ENCODE measurements at regions of chr12 and their contacts with region 1.

Region 1: DNA sequence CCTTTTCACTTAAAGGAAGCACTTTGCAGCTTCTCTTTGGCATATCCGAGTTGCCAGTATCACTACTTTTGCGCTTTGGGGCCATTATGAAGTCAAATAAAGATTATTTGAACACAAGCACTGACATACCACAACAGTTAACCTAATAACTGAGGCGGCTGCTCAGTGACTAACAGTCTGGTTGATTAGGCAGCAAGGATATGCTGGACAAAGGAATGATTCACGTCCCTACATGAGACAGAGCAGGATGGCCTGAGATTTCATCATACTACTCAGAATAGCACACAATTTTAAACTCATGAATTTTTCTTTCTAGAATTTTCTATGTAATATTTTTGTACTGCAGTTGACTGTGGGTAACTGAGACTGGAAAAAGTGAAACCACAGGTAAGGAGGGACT is 56.9 kb upstream of the E2F7 start:
- DNase-seq: peak; percentile 92
- H3K4me3 ChIP-seq: no peak overlapping the region
- H3K27ac ChIP-seq: peak overlapping the region; percentile 92
- H3K4me1 ChIP-seq: peaks cover 39% of the 10 kb centered on the region
- H3K27me3 ChIP-seq: no peaks in the 10 kb centered on the region
- CTCF ChIP-seq: no peak

Region 2: GRCh38 chr12:77102691-77103090 is 19.5 kb before region 1 on chr12:
- CTCF ChIA-PET with region 1: no interaction called
- dilution Hi-C with region 1: no loop called
- in situ Hi-C with region 1: no loop called
- intact Hi-C with region 1: loop called (anchors 1 kb)
- DNase-seq: peak; percentile 59
- H3K4me3 ChIP-seq: no peak overlapping the region
- H3K27ac ChIP-seq: no peak overlapping the region
- H3K4me1 ChIP-seq: peaks cover 19% of the 10 kb centered on the region
- H3K27me3 ChIP-seq: no peaks in the 10 kb centered on the region
- CTCF ChIP-seq: no peak

Region 3: GRCh38 chr12:77189458-77189857 is 67.2 kb after region 1 on chr12:
- CTCF ChIA-PET with region 1: no interaction called
- dilution Hi-C with region 1: no loop called
- in situ Hi-C with region 1: no loop called
- intact Hi-C with region 1: loop called (anchors 2 kb)
- DNase-seq: peak; percentile 88
- H3K4me3 ChIP-seq: no peak overlapping the region
- H3K27ac ChIP-seq: peak overlapping the region; percentile 54
- H3K4me1 ChIP-seq: peaks cover 11% of the 10 kb centered on the region
- H3K27me3 ChIP-seq: no peaks in the 10 kb centered on the region
- CTCF ChIP-seq: no peak

Region 4: GRCh38 chr12:77324763-77325468 is 202.7 kb after region 1 on chr12:
- CTCF ChIA-PET with region 1: no interaction called
- dilution Hi-C with region 1: no loop called
- in situ Hi-C with region 1: no loop called
- intact Hi-C with region 1: no loop called
- DNase-seq: peak; percentile 71
- H3K4me3 ChIP-seq: peak overlapping the region; percentile 69 to 96 (median 74)
- H3K27ac ChIP-seq: peak overlapping the region; percentile 29
- H3K4me1 ChIP-seq: peaks cover 21% of the 10 kb centered on the region
- H3K27me3 ChIP-seq: no peaks in the 10 kb centered on the region
- CTCF ChIP-seq: peak; percentile 40 to 68

Measured in mammary epithelial cell (primary cell).